Naive thymus-derived CD4-positive, alpha-beta T cell (primary cell): ENCODE measurements at regions of chr4 and their contacts with region 1.

Region 1: DNA sequence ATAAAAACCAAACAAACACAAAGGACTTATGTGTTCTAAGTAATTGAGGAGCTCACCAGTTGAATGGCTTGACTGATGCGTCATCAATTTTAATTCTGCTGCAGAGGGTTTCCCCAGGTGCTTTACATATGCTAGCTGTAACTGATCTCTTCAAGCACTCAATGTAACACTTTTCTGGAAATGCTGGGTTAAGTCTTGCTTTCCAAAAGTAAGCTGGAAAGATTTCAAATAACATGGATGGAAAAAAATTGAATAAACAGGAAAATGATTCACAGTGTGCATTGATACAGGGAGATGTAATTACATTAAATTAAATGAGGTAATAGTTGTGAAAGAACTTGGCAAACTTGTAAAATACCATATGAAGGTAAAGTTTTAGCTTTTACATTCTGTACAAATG is 186.7 kb upstream of the WDFY3 start:
- DNase-seq: no peak
- ATAC-seq: no peak
- H3K4me3 ChIP-seq: no peak overlapping the region
- H3K4me3 Mint-ChIP-seq: no peak overlapping the region
- H3K27ac ChIP-seq: no peak overlapping the region
- H3K27ac Mint-ChIP-seq: no peak overlapping the region
- H3K4me1 ChIP-seq: no peaks in the 10 kb centered on the region
- H3K4me1 Mint-ChIP-seq: no peaks in the 10 kb centered on the region
- H3K27me3 ChIP-seq: no peaks in the 10 kb centered on the region
- H3K27me3 Mint-ChIP-seq: peaks cover 0 to 8% (median 0%) of the 10 kb centered on the region in 5 donors

Region 2: DNA sequence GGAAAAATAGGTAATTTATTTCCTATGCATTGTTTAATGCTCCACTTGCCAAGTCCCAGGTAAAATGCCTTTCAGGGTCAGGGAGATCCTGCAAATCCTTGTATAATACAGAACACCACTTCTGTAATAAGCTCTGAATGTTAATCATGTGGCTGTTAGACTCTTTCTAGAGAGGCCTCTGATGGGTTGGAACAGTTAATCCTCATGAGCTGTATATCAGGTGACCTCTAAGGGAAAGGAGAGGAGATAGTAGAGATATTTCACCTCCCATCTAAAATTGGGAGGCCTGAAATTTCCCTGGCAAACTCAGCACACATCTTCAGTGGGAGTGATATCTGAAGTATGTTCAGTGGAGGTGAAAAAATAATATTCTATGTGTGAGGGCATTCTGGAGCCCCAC is 23.9 kb after region 1 on chr4:
- CTCF ChIA-PET with region 1: no interaction called
- POLR2A ChIA-PET with region 1: no interaction called
- intact Hi-C with region 1: no loop called
- DNase-seq: no peak
- ATAC-seq: no peak
- H3K4me3 ChIP-seq: no peak overlapping the region
- H3K4me3 Mint-ChIP-seq: no peak overlapping the region
- H3K27ac ChIP-seq: no peak overlapping the region
- H3K27ac Mint-ChIP-seq: no peak overlapping the region
- H3K4me1 ChIP-seq: no peaks in the 10 kb centered on the region
- H3K4me1 Mint-ChIP-seq: no peaks in the 10 kb centered on the region
- H3K27me3 ChIP-seq: no peaks in the 10 kb centered on the region
- H3K27me3 Mint-ChIP-seq: no peaks in the 10 kb centered on the region

Region 3: GRCh38 chr4:85187106-85187505 is 33.9 kb after region 1 on chr4:
- CTCF ChIA-PET with region 1: no interaction called
- POLR2A ChIA-PET with region 1: no interaction called
- intact Hi-C with region 1: loop called in 1 of 2 experiments (anchors 1 kb)
- DNase-seq: no peak
- ATAC-seq: no peak
- H3K4me3 ChIP-seq: no peak overlapping the region
- H3K4me3 Mint-ChIP-seq: no peak overlapping the region
- H3K27ac ChIP-seq: no peak overlapping the region
- H3K27ac Mint-ChIP-seq: no peak overlapping the region
- H3K4me1 ChIP-seq: no peaks in the 10 kb centered on the region
- H3K4me1 Mint-ChIP-seq: no peaks in the 10 kb centered on the region
- H3K27me3 ChIP-seq: no peaks in the 10 kb centered on the region
- H3K27me3 Mint-ChIP-seq: no peaks in the 10 kb centered on the region

Region 4: DNA sequence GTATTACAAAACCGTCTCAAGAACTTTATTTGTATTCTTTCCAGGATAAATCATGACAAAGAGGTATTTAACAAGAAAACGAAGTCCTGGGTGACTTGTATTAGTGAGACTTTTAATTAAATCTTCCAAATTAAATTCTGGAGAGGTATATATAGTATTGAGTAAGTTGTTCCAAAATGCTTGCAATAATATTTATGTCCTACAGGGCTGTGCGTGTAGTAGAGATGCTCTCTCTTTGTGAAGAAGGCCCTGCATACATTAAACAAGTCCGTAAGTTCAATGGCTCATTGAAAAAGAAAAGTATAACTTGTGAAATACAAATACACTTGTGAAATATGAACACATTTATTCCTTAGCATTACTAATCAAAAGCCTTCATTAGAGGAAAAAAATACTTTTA is 533.2 kb after region 1 on chr4:
- CTCF ChIA-PET with region 1: no interaction called
- POLR2A ChIA-PET with region 1: no interaction called
- intact Hi-C with region 1: no loop called
- DNase-seq: no peak
- ATAC-seq: no peak
- H3K4me3 ChIP-seq: no peak overlapping the region
- H3K4me3 Mint-ChIP-seq: no peak overlapping the region
- H3K27ac ChIP-seq: no peak overlapping the region
- H3K27ac Mint-ChIP-seq: no peak overlapping the region
- H3K4me1 ChIP-seq: no peaks in the 10 kb centered on the region
- H3K4me1 Mint-ChIP-seq: no peaks in the 10 kb centered on the region
- H3K27me3 ChIP-seq: no peaks in the 10 kb centered on the region
- H3K27me3 Mint-ChIP-seq: no peaks in the 10 kb centered on the region